Activated CD4-positive, alpha-beta T cell treated with anti-CD3 and anti-CD28 coated beads for 36 hours (primary cell): ENCODE measurements at regions of chr16 and their contacts with region 1.

Region 1: DNA sequence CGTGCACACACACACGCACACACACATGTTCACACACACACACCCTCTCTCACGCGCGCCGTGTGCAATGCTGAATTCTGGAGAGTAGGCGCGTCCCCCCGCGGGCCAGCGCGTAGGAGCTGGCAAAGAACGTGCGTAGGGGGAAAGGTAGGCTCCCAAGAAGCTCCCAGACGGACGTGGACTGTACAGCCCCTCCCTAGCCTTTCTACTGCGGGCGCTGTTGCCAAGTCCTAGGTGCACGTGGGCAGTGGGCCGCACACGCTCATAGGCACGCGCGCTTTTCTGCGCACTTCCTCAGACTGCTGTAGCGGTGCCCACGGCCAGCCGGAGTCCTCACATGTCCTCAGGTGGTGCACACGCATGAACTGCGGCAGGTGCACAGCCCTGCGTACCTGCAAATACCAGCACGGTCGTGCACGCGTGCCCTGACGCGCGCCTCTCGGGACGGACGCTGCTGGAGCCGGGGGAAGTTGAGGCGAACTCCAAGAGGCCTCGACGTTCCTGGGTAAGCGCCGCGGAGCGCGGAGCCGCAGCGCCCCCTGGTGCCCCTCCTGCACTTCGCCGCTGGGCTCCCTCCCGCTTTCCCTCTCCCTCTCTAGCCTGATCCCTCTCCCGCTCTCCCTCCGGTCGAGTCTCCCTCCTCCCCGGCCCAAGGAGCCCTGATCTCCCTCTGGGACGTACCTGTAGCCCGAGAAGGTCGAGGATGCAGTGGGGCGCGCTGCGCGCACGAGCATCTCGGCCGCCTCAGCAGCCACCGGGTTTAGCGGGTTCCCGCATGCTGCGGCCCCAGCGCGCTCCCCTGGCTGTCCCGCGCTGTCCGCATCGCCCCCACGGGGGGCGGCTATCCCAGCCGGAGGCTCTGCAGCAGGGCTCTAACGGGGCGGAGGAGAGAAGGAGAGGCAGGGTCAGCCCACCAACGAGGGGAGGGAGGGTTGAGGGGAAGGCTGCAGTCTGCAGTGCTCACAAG is 749 bp downstream of the GRIN2A start:
- DNase-seq: peak; percentile 74
- ATAC-seq: peak; percentile 71
- H3K4me3 Mint-ChIP-seq: no peak overlapping the region
- H3K27ac Mint-ChIP-seq: no peak overlapping the region
- H3K4me1 Mint-ChIP-seq: peaks cover 11% of the 10 kb centered on the region
- H3K27me3 Mint-ChIP-seq: peaks cover 52% of the 10 kb centered on the region

Region 2: GRCh38 chr16:9159839-9160550 is 1021.5 kb before region 1 on chr16:
- CTCF ChIA-PET with region 1: no interaction called
- POLR2A ChIA-PET with region 1: no interaction called
- intact Hi-C with region 1: loop called in 1 of 2 experiments (anchors 1 kb)
- DNase-seq: peak; percentile 70
- ATAC-seq: peak; percentile 53
- H3K4me3 Mint-ChIP-seq: no peak overlapping the region
- H3K27ac Mint-ChIP-seq: no peak overlapping the region
- H3K4me1 Mint-ChIP-seq: no peaks in the 10 kb centered on the region
- H3K27me3 Mint-ChIP-seq: peaks cover 18% of the 10 kb centered on the region

Region 3: GRCh38 chr16:9258423-9259051 is 922.9 kb before region 1 on chr16:
- CTCF ChIA-PET with region 1: interaction called, 5 read pairs
- POLR2A ChIA-PET with region 1: no interaction called
- intact Hi-C with region 1: loop called in 1 of 2 experiments (anchors 1 kb)
- DNase-seq: peak; percentile 62
- ATAC-seq: peak; percentile 53
- H3K4me3 Mint-ChIP-seq: no peak overlapping the region
- H3K27ac Mint-ChIP-seq: no peak overlapping the region
- H3K4me1 Mint-ChIP-seq: no peaks in the 10 kb centered on the region
- H3K27me3 Mint-ChIP-seq: peaks cover 24% of the 10 kb centered on the region

Region 4: DNA sequence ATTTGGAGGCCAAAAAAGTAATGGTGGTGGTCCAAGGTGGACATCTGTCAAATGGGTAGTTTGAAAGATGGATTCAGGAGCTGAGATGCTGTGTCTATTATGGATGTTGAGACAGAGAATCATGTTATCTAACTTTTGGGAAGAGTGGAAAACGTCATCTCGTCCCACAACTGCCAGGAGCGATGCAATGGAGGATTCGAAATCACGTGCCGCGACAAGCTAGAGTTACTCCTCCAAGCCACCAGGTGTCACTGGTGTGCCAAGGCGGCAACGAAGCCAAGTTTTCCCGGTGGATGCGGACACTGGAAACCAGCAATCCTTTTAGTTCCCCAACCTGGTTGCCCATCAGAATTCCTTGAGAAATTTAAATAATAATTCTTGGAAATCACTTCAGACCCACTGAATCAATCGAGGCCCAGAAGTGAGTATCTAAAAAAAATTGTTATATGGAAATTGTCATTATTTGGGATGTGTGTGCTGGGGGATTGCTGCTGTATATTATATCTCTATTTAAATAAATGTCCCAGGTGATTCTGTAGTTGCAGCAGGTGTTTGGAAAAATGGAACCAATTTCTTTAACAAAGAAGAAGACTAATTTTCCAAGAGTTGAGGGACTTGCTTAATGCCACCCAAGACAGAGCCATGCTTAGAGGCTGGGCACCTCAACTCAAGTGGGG is 883.9 kb before region 1 on chr16:
- CTCF ChIA-PET with region 1: no interaction called
- POLR2A ChIA-PET with region 1: no interaction called
- intact Hi-C with region 1: loop called (anchors 1 to 5 kb)
- DNase-seq: peak; percentile 19
- ATAC-seq: no peak
- H3K4me3 Mint-ChIP-seq: no peak overlapping the region
- H3K27ac Mint-ChIP-seq: no peak overlapping the region
- H3K4me1 Mint-ChIP-seq: no peaks in the 10 kb centered on the region
- H3K27me3 Mint-ChIP-seq: peaks cover 5% of the 10 kb centered on the region

Region 5: DNA sequence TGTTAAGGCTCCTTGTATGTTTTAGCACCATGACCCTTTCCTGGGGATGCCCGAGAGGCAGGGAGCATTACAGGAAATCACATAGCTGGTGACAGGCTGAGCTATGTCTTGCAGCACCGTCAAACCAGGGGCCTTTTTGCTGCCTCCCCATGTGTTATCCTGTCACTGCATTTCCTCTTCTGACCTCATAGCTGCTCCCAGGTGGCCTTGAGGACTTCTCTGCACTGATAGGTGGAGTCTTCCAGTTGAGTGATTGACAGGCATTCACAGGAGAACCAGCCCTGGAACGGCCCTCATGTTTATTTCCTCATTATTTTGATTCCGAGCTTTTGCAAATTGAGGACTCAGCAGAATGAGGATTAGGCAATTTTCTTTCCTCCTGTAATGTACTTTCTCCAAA is 740.5 kb before region 1 on chr16:
- CTCF ChIA-PET with region 1: no interaction called
- POLR2A ChIA-PET with region 1: no interaction called
- intact Hi-C with region 1: loop called in 1 of 2 experiments (anchors 10 kb)
- DNase-seq: no peak
- ATAC-seq: no peak
- H3K4me3 Mint-ChIP-seq: no peak overlapping the region
- H3K27ac Mint-ChIP-seq: no peak overlapping the region
- H3K4me1 Mint-ChIP-seq: no peaks in the 10 kb centered on the region
- H3K27me3 Mint-ChIP-seq: no peaks in the 10 kb centered on the region

Region 6: GRCh38 chr16:9706217-9706836 is 475.2 kb before region 1 on chr16:
- CTCF ChIA-PET with region 1: no interaction called
- POLR2A ChIA-PET with region 1: no interaction called
- intact Hi-C with region 1: no loop called
- DNase-seq: no peak
- ATAC-seq: no peak
- H3K4me3 Mint-ChIP-seq: no peak overlapping the region
- H3K27ac Mint-ChIP-seq: no peak overlapping the region
- H3K4me1 Mint-ChIP-seq: no peaks in the 10 kb centered on the region
- H3K27me3 Mint-ChIP-seq: peaks cover 2% of the 10 kb centered on the region

Region 7: DNA sequence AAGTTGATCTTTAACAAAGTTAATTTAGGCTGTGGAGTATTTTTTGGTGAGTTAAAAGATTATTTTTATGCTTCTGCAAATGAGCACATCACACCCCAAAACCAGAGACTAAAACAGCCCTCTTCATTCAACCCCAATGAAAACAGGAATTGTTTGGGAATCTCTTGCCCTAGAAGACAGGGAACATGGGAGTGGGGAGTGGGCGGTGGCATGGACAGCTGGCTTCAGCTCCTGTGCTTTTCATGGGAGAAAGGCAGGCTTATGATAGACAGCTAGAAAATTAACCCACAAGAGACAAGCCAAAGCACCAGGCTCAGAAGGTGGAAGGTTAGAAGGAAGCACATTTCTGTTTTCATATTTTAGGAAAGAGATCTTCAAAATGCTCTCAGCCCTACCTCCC is 18.5 kb before region 1 on chr16:
- CTCF ChIA-PET with region 1: no interaction called
- POLR2A ChIA-PET with region 1: no interaction called
- intact Hi-C with region 1: no loop called
- DNase-seq: no peak
- ATAC-seq: no peak
- H3K4me3 Mint-ChIP-seq: no peak overlapping the region
- H3K27ac Mint-ChIP-seq: no peak overlapping the region
- H3K4me1 Mint-ChIP-seq: no peaks in the 10 kb centered on the region
- H3K27me3 Mint-ChIP-seq: peaks cover 15% of the 10 kb centered on the region